CD8-positive, alpha-beta T cell (primary cell): ENCODE measurements at regions of chr14 and their contacts with region 1.

Region 1: DNA sequence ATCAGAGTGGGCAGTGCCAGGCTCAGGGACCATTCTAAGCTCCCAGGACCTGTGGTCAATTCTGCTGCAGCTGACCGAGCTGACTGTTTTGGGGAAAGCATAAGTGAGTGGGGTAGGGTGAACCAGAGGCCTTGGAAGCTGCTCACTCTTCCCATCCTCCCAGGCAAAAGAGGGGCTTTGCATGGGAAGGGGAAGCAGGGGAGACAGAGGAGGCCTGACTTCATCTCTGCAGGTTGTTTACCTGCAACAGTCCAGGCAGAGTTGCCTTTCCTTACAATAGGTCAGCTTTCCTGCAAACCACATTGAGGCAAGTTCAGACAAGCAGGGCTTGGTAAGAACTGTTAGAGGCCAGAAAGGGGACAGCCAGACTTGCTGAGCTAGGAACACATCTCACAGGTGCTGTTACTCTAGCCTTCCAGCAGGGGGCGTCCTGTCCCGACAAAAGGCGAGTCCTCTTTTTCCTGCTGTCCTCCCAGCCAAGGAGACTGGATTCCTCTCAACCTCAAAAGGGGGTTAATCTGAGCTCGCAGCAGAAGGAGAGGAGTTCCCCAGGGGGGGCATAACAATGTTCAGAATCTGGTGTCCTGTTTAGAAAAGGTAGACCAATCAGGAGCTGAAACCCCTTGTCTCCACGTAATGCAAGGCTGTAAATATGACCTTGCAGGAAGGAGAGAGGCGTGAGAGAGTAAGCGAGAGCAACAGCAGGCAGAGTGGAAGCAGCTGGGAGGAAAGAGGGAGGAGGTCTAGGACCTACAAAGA is 4.3 kb upstream of the DHRS2 start:
- DNase-seq: peak; percentile 41 to 86 (median 75)
- ATAC-seq: peak; percentile 88
- H3K4me3 ChIP-seq: peak overlapping the region; percentile 21 to 33
- H3K4me3 Mint-ChIP-seq: peak overlapping the region; percentile 75
- H3K27ac ChIP-seq: no peak overlapping the region
- H3K27ac Mint-ChIP-seq: peak overlapping the region; percentile 42
- H3K4me1 ChIP-seq: peaks cover 13% of the 10 kb centered on the region
- H3K4me1 Mint-ChIP-seq: peaks cover 7% of the 10 kb centered on the region
- H3K27me3 ChIP-seq: no peaks in the 10 kb centered on the region
- H3K27me3 Mint-ChIP-seq: no peaks in the 10 kb centered on the region
- CTCF ChIP-seq: peak; percentile 97

Region 2: DNA sequence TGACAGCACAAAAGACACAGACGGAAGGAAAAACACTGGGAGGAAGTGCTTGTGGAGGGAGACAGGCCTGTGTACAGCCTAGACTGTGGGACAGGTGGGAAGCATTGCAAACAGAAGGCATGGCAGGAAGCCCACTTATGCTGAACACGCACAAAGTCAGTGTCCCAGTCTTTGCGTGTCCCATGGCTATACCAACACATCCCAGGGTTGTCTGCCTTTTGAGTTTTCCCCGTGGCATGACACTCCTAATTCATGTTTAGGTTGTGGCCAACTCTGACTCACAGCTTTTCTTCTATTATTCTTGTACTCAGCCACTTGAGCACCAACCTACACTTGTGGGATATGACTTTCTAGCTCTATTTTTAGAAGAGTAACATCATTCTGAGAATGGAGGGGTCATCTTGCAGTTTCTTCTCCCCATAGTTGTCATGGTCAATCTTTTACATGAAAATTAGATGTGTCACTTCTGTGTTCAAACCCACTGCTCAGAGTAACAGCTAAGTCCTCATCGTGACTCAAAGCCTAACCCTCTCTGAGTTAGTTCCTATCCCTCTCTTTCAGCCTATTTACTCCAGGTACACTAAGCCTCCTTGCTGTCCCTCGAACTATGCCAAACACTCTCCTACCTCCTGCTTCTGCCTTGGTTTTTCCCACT is 25.8 kb before region 1 on chr14:
- CTCF ChIA-PET with region 1: interaction called, 51 read pairs
- POLR2A ChIA-PET with region 1: interaction called, 15 read pairs
- intact Hi-C with region 1: no loop called
- DNase-seq: no peak
- ATAC-seq: no peak
- H3K4me3 ChIP-seq: no peak overlapping the region
- H3K4me3 Mint-ChIP-seq: no peak overlapping the region
- H3K27ac ChIP-seq: no peak overlapping the region
- H3K27ac Mint-ChIP-seq: no peak overlapping the region
- H3K4me1 ChIP-seq: peaks cover 19% of the 10 kb centered on the region
- H3K4me1 Mint-ChIP-seq: peaks cover 30% of the 10 kb centered on the region
- H3K27me3 ChIP-seq: no peaks in the 10 kb centered on the region
- H3K27me3 Mint-ChIP-seq: no peaks in the 10 kb centered on the region
- CTCF ChIP-seq: no peak

Region 3: GRCh38 chr14:23646648-23647549 is 15.0 kb after region 1 on chr14:
- CTCF ChIA-PET with region 1: interaction called, 43 read pairs
- POLR2A ChIA-PET with region 1: interaction called, 6 read pairs
- intact Hi-C with region 1: no loop called
- DNase-seq: no peak
- ATAC-seq: no peak
- H3K4me3 ChIP-seq: no peak overlapping the region
- H3K4me3 Mint-ChIP-seq: no peak overlapping the region
- H3K27ac ChIP-seq: no peak overlapping the region
- H3K27ac Mint-ChIP-seq: no peak overlapping the region
- H3K4me1 ChIP-seq: no peaks in the 10 kb centered on the region
- H3K4me1 Mint-ChIP-seq: no peaks in the 10 kb centered on the region
- H3K27me3 ChIP-seq: no peaks in the 10 kb centered on the region
- H3K27me3 Mint-ChIP-seq: peaks cover 8% of the 10 kb centered on the region
- CTCF ChIP-seq: no peak

Region 4: DNA sequence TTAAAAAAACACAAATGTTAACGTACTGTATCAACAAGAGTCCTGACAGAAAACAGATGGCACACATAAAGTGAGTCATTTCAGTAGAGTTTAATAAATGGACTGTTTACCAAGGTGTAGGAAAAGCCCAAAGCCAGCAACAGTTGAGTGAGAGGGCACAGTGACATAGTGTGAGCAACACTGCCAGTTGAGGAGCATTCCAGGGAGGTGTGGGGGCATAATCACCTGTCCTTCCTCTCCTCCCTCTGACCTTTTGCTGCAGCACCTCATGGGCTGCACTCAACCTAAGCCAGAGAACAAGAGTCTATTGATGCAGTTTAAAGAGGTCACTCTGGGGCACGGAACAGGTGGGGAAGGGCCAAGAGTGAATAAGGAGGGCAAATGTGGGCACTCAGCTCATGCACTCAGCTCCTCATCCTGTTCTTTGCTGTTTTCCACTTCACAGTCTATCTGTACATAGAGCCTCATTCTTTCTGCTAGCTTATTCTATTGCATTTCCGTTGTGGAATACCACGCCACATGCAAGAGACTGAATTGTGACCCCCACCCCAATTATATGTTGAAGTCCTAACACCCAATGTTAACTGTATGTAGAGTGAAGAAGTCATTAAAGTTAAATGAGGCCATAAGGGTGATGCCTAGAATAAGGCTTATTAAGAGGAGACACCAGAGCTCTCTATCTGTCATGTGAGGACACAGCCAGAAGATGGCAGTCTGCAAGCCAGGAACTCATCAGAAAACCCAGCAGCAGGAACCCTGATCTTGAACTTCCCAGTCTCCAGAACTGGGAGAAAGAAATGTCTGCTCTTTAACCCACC is 33.7 kb after region 1 on chr14:
- CTCF ChIA-PET with region 1: interaction called, 24 read pairs
- POLR2A ChIA-PET with region 1: no interaction called
- intact Hi-C with region 1: no loop called
- DNase-seq: peak in 4 of 9 experiments; percentile 10 to 56 (median 44)
- ATAC-seq: no peak
- H3K4me3 ChIP-seq: no peak overlapping the region
- H3K4me3 Mint-ChIP-seq: no peak overlapping the region
- H3K27ac ChIP-seq: no peak overlapping the region
- H3K27ac Mint-ChIP-seq: no peak overlapping the region
- H3K4me1 ChIP-seq: peaks cover 6% of the 10 kb centered on the region
- H3K4me1 Mint-ChIP-seq: peaks cover 1% of the 10 kb centered on the region
- H3K27me3 ChIP-seq: no peaks in the 10 kb centered on the region
- H3K27me3 Mint-ChIP-seq: no peaks in the 10 kb centered on the region
- CTCF ChIP-seq: peak; percentile 19

Region 5: DNA sequence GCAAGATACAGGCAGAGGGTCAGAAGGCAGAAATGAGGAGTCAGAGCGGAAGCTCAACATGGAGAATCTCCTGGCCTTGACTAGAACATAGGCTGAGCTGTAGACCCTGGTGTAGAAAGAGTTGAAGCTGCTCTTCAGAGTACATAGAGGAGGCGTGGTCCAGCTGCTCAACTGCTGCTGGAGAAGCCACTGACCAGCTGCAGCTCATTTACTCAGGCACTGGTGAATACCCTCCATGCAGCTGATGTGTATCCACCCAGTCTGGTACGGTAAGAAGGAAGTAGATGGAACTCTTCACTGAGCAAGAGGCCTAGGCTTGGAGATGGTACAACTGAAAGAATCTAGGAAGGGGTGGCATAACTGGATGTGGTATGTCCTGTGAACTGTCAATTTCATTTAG is 172.9 kb after region 1 on chr14:
- CTCF ChIA-PET with region 1: no interaction called
- POLR2A ChIA-PET with region 1: no interaction called
- intact Hi-C with region 1: no loop called
- DNase-seq: no peak
- ATAC-seq: no peak
- H3K4me3 ChIP-seq: no peak overlapping the region
- H3K4me3 Mint-ChIP-seq: no peak overlapping the region
- H3K27ac ChIP-seq: no peak overlapping the region
- H3K27ac Mint-ChIP-seq: no peak overlapping the region
- H3K4me1 ChIP-seq: no peaks in the 10 kb centered on the region
- H3K4me1 Mint-ChIP-seq: no peaks in the 10 kb centered on the region
- H3K27me3 ChIP-seq: peaks cover 0 to 2% of the 10 kb centered on the region in 2 experiments
- H3K27me3 Mint-ChIP-seq: peaks cover 7% of the 10 kb centered on the region
- CTCF ChIP-seq: no peak

Region 6: DNA sequence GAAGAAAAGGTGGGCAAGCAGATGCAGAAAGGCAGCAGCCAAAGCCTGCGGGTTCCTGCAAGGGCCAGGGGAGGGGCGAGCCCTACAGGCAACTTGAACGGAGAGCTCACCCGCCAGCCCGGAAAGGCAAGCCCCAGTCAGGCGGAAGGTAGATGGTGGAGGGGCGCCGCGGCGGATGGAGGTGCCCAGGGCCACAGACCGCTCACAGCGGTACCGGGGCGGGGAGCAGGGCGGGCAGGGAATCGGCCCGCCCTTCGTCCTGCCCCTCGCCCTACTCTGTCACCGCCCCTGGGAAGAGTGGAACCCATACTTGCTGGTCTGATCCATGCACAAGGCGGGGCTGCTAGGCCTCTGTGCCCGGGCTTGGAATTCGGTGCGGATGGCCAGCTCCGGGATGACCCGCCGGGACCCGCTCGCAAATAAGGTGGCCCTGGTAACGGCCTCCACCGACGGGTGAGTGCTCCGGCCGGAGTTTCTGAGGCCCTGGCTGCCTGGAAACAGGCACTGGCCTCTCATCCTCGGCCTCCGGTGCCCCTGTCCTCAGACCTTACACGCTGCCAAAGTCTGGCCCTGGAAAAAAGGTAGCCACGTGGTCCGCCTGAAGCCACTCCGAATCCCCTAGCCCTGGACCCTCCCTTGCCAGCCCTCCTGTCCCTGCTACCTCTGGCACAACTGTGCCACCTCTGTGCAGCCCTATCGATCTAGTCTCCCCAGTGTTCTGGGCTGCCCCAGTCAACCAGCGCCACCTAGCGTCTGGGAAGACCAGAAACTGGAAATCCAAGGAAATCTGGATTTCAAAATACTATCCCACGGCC is 321.8 kb after region 1 on chr14 and contains the start of gene DHRS4:
- CTCF ChIA-PET with region 1: interaction called, 11 read pairs
- POLR2A ChIA-PET with region 1: no interaction called
- intact Hi-C with region 1: loop called (anchors 1 kb)
- DNase-seq: peak; percentile 71 to 93 (median 83)
- ATAC-seq: peak; percentile 96
- H3K4me3 ChIP-seq: peak within 1 kb of the TSS; percentile 85 to 90
- H3K4me3 Mint-ChIP-seq: peak within 1 kb of the TSS; percentile 97
- H3K27ac ChIP-seq: peak within 1 kb of the TSS; percentile 49 to 65
- H3K27ac Mint-ChIP-seq: peak within 1 kb of the TSS; percentile 91
- H3K4me1 ChIP-seq: peaks cover 10% of the 10 kb centered on the region
- H3K4me1 Mint-ChIP-seq: peaks cover 32% of the 10 kb centered on the region
- H3K27me3 ChIP-seq: no peaks in the 10 kb centered on the region
- H3K27me3 Mint-ChIP-seq: no peaks in the 10 kb centered on the region
- CTCF ChIP-seq: peak; percentile 90
- total RNA-seq, gene DHRS4: 6.8 to 7.1 TPM